ENCODE measurements at regions of chr21 and their contacts with region 1.

Region 1: DNA sequence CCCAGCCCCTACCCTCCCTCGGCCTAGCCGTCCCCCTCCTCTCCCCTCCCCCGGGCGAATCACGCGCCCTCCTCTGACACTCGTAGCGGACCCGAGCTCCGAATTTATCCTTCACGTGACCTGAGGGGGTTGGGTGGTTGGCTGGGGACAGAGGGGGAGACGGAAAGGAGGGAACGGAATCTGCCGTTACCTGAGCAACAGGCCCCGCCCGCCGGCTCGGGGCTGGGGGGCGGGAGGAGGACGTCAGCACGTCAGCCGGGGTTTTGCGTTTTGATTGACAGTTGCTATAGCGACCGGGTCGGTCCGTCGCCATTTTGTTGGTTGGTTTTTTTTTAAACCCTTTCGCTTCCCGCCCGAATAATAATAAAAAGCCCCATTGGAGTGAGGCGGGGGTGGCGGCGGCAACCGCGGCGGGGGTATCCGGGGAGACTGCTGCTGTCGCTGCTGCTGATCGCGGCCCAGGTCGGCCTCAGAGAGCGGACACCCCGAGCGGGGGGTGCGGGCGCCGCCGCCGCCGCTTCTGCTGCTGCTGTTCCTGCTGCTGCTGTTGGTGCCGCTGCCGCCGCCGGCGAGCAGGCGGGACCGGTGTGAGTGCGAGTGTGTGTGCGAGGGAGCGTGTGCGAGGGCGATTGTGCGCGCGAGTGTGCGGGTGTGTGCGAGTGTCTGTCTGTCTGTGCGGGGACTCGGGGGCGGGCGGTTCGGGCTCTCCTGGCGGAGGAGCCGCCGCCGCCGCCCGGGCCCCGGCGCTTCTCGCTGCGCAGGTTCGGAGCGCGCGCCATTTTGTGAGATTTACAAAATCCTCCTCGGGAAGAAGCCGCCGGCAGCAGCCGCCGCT is at the start of gene DYRK1A:
- DNase-seq: peak; percentile 99 to 100 (median 100)
- H3K4me3 ChIP-seq: peak within 1 kb of the TSS; percentile 91 to 100 (median 93)
- H3K27ac ChIP-seq: peak within 1 kb of the TSS; percentile 96 to 99
- H3K4me1 ChIP-seq: peaks cover 32 to 55% (median 44%) of the 10 kb centered on the region in 4 experiments
- H3K27me3 ChIP-seq: no peaks in the 10 kb centered on the region

Region 2: GRCh38 chr21:37267269-37268184 is 99.2 kb before region 1 on chr21 and contains the start of gene VPS26C:
- CTCF ChIA-PET with region 1: interaction called, 14 read pairs
- POLR2A ChIA-PET with region 1: interaction called, 23 read pairs
- DNase-seq: peak; percentile 99 to 100 (median 100)
- H3K4me3 ChIP-seq: peak within 1 kb of the TSS; percentile 52 to 90 (median 80)
- H3K27ac ChIP-seq: peak within 1 kb of the TSS; percentile 98
- H3K4me1 ChIP-seq: peaks cover 14 to 37% (median 20%) of the 10 kb centered on the region in 4 experiments
- H3K27me3 ChIP-seq: no peaks in the 10 kb centered on the region

Measured in common myeloid progenitor, CD34-positive (primary cell).